K562 (cell line): ENCODE measurements at regions of chr14 and their contacts with region 1.

Region 1: GRCh38 chr14:60561845-60562746 is 53.1 kb downstream of the SIX6 start:
- DNase-seq: peak; percentile 13 to 61 (median 19)
- ATAC-seq: peak; percentile 84
- H3K4me3 ChIP-seq: no peak overlapping the region
- H3K27ac ChIP-seq: no peak overlapping the region
- H3K4me1 ChIP-seq: no peaks in the 10 kb centered on the region
- H3K27me3 ChIP-seq: no peaks in the 10 kb centered on the region
- CTCF ChIP-seq: peak; percentile 60 to 95 (median 77)
- EP300 ChIP-seq: no peak
- POLR2A ChIP-seq: no peak
- RAD21 ChIP-seq: peak; percentile 67 to 82

Region 2: DNA sequence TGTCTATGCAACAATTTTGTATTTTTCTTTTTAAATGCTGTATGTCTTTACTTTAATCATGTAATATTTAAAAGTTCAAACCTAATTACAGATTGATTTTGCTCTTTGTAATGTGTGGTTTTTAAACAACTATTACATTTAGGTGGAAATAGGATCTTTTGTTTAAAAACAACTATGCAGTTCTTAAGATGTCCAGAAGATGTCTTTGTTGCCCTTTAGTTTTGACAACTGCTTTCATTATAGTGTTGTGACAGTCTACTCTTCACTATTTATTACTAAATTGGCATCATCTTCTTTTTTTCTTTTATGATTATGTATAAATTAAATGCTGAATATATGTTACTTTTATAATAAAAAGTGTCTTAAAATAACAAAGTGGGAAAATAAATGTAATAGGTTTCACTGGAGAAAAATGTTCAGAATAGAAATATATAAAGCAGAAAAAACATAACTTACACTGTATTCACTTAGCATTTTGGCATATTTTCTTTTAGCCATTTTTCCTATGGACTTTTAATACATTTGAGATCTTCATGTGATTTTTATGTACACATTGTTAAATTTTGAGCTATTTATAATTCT is 497.5 kb before region 1 on chr14:
- CTCF ChIA-PET with region 1: interaction called, 11 read pairs
- POLR2A ChIA-PET with region 1: no interaction called
- in situ Hi-C with region 1: loop called (anchors 25 kb)
- intact Hi-C with region 1: loop called (anchors 5 kb)
- DNase-seq: peak in 2 of 4 experiments; percentile 9 to 26
- ATAC-seq: peak; percentile 63; the same call in 2 of the 3 replicates
- H3K4me3 ChIP-seq: no peak overlapping the region
- H3K27ac ChIP-seq: no peak overlapping the region
- H3K4me1 ChIP-seq: no peaks in the 10 kb centered on the region
- H3K27me3 ChIP-seq: no peaks in the 10 kb centered on the region
- CTCF ChIP-seq: peak in 2 of 3 experiments; percentile 25 to 70; a peak in 3 of 6 replicates
- EP300 ChIP-seq: no peak
- POLR2A ChIP-seq: no peak
- RAD21 ChIP-seq: peak; percentile 75 to 85

Region 3: GRCh38 chr14:60184146-60184904 is 377.8 kb before region 1 on chr14:
- CTCF ChIA-PET with region 1: interaction called, 9 read pairs
- POLR2A ChIA-PET with region 1: no interaction called
- in situ Hi-C with region 1: no loop called
- intact Hi-C with region 1: loop called (anchors 2 kb)
- DNase-seq: peak in 3 of 4 experiments; percentile 10 to 57 (median 11)
- ATAC-seq: peak; percentile 53; the same call in 2 of the 3 replicates
- H3K4me3 ChIP-seq: no peak overlapping the region
- H3K27ac ChIP-seq: no peak overlapping the region
- H3K4me1 ChIP-seq: no peaks in the 10 kb centered on the region
- H3K27me3 ChIP-seq: peaks cover 0 to 3% of the 10 kb centered on the region in 2 experiments; a peak in 1 of 5 replicates
- CTCF ChIP-seq: peak; percentile 39 to 76 (median 44); a peak in 4 of 6 replicates
- EP300 ChIP-seq: no peak
- POLR2A ChIP-seq: no peak
- RAD21 ChIP-seq: peak; percentile 83 to 88

Region 4: DNA sequence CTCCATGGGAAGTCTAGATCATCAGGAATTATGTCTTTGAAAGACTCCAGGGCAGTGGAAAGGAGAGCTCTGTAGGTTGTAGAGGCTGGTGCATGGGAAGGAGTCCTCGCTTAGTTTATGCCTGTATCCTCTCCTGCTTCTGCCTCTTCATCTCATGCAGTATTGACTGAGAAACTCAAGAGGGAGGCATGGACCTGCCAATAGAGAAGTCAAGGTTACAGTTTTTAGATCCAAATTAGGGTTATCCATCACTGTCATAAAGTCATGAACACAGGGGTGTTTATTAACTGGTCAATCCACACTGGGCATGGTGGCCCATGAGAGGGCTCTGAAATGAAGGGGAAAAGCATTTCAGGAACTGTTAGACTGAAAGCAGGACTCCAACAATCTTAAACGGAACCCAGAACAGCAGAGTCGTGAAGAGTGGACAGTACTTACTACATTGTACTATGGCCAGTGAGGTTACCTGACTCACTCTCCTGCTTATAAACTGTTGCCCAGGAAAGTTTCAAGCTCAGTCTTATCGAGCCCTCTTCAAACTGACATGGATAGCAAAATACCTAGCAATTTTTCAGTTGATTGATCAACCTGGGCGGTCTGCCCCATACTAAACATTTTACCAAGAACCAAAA is 366.8 kb before region 1 on chr14:
- CTCF ChIA-PET with region 1: no interaction called
- POLR2A ChIA-PET with region 1: no interaction called
- in situ Hi-C with region 1: no loop called
- intact Hi-C with region 1: loop called (anchors 2 kb)
- DNase-seq: peak in 1 of 4 experiments; percentile 16
- ATAC-seq: peak; percentile 78
- H3K4me3 ChIP-seq: no peak overlapping the region
- H3K27ac ChIP-seq: no peak overlapping the region
- H3K4me1 ChIP-seq: peaks cover 0 to 3% of the 10 kb centered on the region in 2 experiments; a peak in 2 of 5 replicates
- H3K27me3 ChIP-seq: no peaks in the 10 kb centered on the region
- CTCF ChIP-seq: peak in 2 of 3 experiments; percentile 23 to 38; a peak in 3 of 6 replicates
- EP300 ChIP-seq: no peak
- POLR2A ChIP-seq: no peak
- RAD21 ChIP-seq: peak; percentile 28 to 58

Region 5: DNA sequence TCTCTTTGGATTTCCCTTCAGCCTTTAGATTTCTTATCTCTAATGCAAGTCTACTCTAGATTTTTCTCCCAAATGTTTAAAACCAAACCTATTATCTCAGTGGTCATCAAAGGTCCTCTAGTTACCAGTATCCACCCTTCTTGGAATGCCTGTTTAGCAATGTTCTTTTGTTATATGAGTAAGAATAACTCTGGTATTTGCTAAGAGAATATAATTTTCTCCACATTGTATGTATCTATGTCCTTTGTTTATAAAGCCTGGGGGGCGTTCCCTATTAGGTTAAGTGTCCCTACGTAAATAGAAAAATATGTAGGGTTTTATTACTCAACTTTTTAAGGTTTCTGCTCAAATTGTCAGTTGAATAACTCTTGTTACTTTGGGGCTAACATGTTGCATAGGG is 285.8 kb before region 1 on chr14:
- CTCF ChIA-PET with region 1: no interaction called
- POLR2A ChIA-PET with region 1: no interaction called
- in situ Hi-C with region 1: no loop called
- intact Hi-C with region 1: no loop called
- DNase-seq: no peak
- ATAC-seq: no peak
- H3K4me3 ChIP-seq: no peak overlapping the region
- H3K27ac ChIP-seq: no peak overlapping the region
- H3K4me1 ChIP-seq: peaks cover 6 to 15% of the 10 kb centered on the region in 2 experiments; a peak in 3 of 5 replicates
- H3K27me3 ChIP-seq: no peaks in the 10 kb centered on the region
- CTCF ChIP-seq: no peak
- EP300 ChIP-seq: no peak
- POLR2A ChIP-seq: no peak
- RAD21 ChIP-seq: no peak

Region 6: DNA sequence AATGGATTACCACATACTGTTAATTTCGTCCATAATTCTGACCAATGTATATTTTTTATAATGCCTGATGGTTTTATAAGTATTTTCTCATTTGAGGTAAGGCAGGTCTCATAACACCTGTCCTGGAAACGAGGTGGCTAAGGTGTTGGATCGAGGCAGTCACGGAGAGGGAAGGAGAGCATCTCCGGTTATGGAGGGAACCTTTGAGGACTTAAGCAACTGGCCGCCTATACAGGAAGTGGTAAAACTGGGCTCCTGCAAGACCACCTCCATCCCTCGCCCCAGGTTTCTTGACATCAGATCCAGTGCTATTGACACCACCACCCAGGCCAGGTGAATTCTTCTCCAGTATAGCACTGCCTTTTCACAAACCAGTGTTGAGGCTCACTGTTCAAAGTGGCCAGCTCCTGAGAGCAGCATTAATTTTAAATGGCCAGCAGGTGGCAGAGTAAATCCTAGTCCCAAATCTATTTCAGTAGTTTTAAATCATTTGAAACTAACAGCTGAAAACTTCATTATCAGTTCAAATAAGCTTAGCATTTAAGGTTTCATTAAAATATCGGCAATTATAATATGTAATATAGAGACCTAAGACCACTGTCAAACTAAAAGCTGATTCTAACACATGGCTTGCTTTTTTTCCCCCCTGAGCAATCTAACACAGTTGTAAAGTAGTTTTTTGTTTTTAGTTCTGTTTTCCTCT is 212.3 kb before region 1 on chr14:
- CTCF ChIA-PET with region 1: interaction called, 3 read pairs
- POLR2A ChIA-PET with region 1: no interaction called
- in situ Hi-C with region 1: loop called (anchors 5 kb)
- intact Hi-C with region 1: loop called (anchors 1 kb)
- DNase-seq: peak; percentile 26 to 61 (median 33)
- ATAC-seq: peak; percentile 86
- H3K4me3 ChIP-seq: no peak overlapping the region
- H3K27ac ChIP-seq: no peak overlapping the region
- H3K4me1 ChIP-seq: no peaks in the 10 kb centered on the region; a peak in 1 of 5 replicates
- H3K27me3 ChIP-seq: no peaks in the 10 kb centered on the region
- CTCF ChIP-seq: peak; percentile 39 to 56 (median 53); a peak in 4 of 6 replicates
- EP300 ChIP-seq: no peak
- POLR2A ChIP-seq: no peak
- RAD21 ChIP-seq: peak; percentile 51 to 61

Region 7: DNA sequence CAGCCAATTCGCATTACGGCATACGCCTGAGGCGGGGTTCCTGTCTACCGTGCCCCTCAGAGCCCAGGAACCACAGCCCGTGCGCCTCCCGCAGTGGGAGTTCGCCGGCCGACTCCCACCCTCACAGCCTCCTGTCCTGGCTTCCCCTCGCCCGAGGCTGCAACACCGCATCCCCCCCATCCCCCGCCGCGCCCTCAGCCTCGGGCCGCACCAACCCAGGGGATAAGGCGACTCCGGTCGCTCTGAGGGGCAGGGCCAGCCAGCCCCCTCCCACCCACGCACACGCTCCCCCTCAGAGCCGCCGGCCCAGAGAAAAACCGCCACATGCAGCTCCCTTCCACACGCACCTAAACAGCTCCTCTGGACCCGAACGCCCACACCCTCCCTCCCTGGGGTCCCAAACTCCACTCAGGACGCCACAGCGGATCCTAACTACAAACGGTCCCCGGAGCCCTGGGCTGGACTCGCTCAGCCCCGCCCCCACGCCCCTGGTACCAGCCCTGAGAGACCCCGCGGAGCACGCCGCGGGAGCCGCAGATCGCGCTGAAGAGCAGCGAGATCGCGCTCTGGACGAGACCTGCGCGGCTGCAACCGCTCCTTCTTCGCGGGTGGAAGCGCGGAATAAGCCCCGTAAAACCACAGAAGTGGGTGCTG is 76.4 kb before region 1 on chr14 and contains the start of gene C14orf39:
- CTCF ChIA-PET with region 1: no interaction called
- POLR2A ChIA-PET with region 1: no interaction called
- in situ Hi-C with region 1: no loop called
- intact Hi-C with region 1: no loop called
- DNase-seq: peak; percentile 79 to 86 (median 81)
- ATAC-seq: peak; percentile 95
- H3K4me3 ChIP-seq: peak within 1 kb of the TSS; percentile 45
- H3K27ac ChIP-seq: peak within 1 kb of the TSS; percentile 87
- H3K4me1 ChIP-seq: peaks cover 0 to 7% of the 10 kb centered on the region in 2 experiments; a peak in 3 of 5 replicates
- H3K27me3 ChIP-seq: no peaks in the 10 kb centered on the region
- CTCF ChIP-seq: peak in 1 of 3 experiments; percentile 8; a peak in 1 of 6 replicates
- EP300 ChIP-seq: 0 out of 2 replicates have a peak, but pooled peaks have one; percentile 24
- POLR2A ChIP-seq: peak; percentile 73
- RAD21 ChIP-seq: no peak
- polyA plus RNA-seq, gene C14orf39: 1.2 to 1.4 TPM

Region 8: GRCh38 chr14:60495946-60496345 is 66.2 kb before region 1 on chr14:
- CTCF ChIA-PET with region 1: no interaction called
- POLR2A ChIA-PET with region 1: no interaction called
- in situ Hi-C with region 1: no loop called
- intact Hi-C with region 1: no loop called
- DNase-seq: no peak
- ATAC-seq: no peak
- H3K4me3 ChIP-seq: no peak overlapping the region
- H3K27ac ChIP-seq: no peak overlapping the region
- H3K4me1 ChIP-seq: no peaks in the 10 kb centered on the region
- H3K27me3 ChIP-seq: no peaks in the 10 kb centered on the region; a peak in 1 of 5 replicates
- CTCF ChIP-seq: no peak
- EP300 ChIP-seq: no peak
- POLR2A ChIP-seq: no peak
- RAD21 ChIP-seq: no peak

Region 9: DNA sequence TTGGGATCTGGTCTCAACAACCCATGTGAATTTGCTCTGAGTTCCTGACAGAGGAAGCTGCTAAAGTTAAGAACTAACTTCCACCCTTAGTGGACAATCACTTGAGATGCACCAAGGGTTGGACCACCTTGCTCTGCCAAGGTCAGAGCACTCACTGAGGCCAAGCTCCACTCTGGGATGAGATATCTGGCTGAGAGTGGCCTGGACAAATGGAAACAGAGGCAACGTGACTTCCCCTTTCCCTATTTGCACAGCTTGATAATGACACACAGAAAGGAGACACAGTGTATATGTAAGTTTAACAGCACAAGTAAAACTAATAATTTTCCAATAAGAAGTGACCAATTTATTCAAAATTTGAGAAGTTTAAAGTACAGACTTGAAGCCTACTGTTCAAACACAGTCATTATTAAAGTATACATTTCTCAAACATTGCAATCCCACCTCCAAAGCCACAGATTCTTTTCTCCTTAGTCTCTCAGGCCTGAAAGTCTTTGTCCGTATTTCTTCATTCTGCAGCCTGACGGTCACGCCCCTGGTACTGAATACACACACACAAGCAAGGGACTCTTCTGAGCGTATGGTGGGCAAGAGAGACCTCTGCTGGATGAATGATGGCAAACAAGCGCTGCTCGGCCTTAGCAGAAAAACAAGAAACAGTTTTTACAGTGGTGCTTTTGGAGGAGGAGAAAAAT is 690.4 kb after region 1 on chr14:
- CTCF ChIA-PET with region 1: no interaction called
- POLR2A ChIA-PET with region 1: no interaction called
- in situ Hi-C with region 1: no loop called
- intact Hi-C with region 1: loop called (anchors 5 kb)
- DNase-seq: peak; percentile 59 to 72 (median 62)
- ATAC-seq: peak; percentile 98
- H3K4me3 ChIP-seq: no peak overlapping the region
- H3K27ac ChIP-seq: no peak overlapping the region
- H3K4me1 ChIP-seq: no peaks in the 10 kb centered on the region
- H3K27me3 ChIP-seq: peaks cover 0 to 9% of the 10 kb centered on the region in 2 experiments; a peak in 3 of 5 replicates
- CTCF ChIP-seq: peak; percentile 72 to 79 (median 73)
- EP300 ChIP-seq: no peak
- POLR2A ChIP-seq: no peak
- RAD21 ChIP-seq: peak; percentile 84 to 89